ENCODE measurements at regions of chr10 and their contacts with region 1.

Region 1: DNA sequence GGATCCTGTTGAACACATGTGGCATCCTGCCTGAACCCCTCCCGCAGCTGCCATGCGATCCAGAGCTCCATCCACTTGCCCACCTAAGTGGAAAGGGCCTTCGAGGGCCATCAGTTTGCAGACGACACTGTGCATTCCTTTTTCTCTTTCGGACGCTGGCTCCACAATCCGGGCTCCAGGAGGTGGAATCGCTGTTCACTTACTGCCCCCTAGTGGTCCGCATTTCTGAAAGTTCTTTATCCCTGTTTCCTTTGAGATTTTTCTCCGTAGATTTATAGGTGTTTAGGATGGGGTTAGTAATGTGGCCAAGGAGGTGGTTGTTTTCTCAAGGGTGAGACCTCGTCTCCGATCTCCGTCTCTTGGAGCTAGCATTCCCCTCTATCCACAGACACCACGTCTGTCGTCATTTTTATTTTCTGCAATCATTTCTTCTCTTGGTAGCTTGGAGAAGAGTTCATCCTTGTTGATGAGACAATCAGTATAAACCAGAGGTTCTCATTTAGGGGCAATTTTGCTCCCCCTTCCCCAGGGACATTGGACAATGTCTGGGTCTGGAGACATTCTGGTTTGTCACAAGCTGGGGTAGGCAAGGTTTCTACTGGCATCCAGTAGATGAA is 204.6 kb downstream of the ARHGAP21 start:
- DNase-seq: peak; percentile 76
- H3K4me3 ChIP-seq: peak overlapping the region in 1 of 2 experiments; percentile 10; a peak in 1 of 4 replicates
- H3K27ac ChIP-seq: no peak overlapping the region
- H3K4me1 ChIP-seq: peaks cover 0 to 3% of the 10 kb centered on the region in 2 experiments; a peak in 2 of 4 replicates
- H3K27me3 ChIP-seq: no peaks in the 10 kb centered on the region
- CTCF ChIP-seq: peak; percentile 89
- EP300 ChIP-seq: 0 out of 4 replicates have a peak, but pooled peaks of 1 of the 2 experiments have one; percentile 10
- RAD21 ChIP-seq: peak; percentile 87

Region 2: GRCh38 chr10:24360282-24361127 is 158.6 kb before region 1 on chr10:
- CTCF ChIA-PET with region 1: interaction called, 19 read pairs
- POLR2A ChIA-PET with region 1: no interaction called
- DNase-seq: peak; percentile 68
- H3K4me3 ChIP-seq: no peak overlapping the region; a peak in 1 of 4 replicates
- H3K27ac ChIP-seq: no peak overlapping the region
- H3K4me1 ChIP-seq: no peaks in the 10 kb centered on the region; a peak in 1 of 4 replicates
- H3K27me3 ChIP-seq: no peaks in the 10 kb centered on the region
- CTCF ChIP-seq: peak; percentile 86
- EP300 ChIP-seq: no peak
- RAD21 ChIP-seq: peak; percentile 91

Region 3: DNA sequence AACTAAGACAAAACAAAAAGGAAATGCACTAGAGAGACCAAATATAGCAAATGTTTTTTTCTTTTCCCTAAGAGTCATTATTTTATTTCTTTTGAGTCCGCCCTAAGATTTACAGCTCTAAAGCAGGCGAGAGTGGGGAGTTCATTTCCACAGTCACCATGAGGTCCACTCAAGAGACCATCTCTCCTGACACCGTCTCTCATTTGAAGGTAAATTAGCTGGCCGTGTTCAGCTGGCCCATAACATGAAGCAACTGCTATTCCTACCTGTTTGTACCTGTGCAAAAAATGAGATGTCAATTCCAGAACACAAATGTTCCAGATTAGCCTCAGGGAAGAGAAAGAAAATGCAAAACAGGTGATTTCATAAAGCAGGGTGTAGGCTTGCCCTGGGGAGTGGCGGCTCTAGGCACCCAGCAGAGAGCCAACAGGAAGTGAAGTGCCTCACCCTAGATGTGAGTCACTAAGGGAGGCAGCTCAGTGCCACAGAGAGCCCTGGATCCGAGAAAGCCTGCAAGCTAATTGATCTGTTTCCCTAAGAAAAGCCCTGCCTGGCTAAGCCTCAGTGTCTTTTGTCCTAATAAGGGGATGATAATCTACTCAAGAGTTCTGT is 35.5 kb before region 1 on chr10:
- CTCF ChIA-PET with region 1: interaction called, 12 read pairs
- POLR2A ChIA-PET with region 1: no interaction called
- DNase-seq: no peak
- H3K4me3 ChIP-seq: no peak overlapping the region
- H3K27ac ChIP-seq: no peak overlapping the region
- H3K4me1 ChIP-seq: peaks cover 0 to 4% of the 10 kb centered on the region in 2 experiments; a peak in 1 of 4 replicates
- H3K27me3 ChIP-seq: no peaks in the 10 kb centered on the region
- CTCF ChIP-seq: no peak
- EP300 ChIP-seq: no peak
- RAD21 ChIP-seq: no peak

Region 4: GRCh38 chr10:24503461-24504320 is 15.4 kb before region 1 on chr10:
- CTCF ChIA-PET with region 1: interaction called, 52 read pairs
- POLR2A ChIA-PET with region 1: interaction called, 5 read pairs
- DNase-seq: peak; percentile 63
- H3K4me3 ChIP-seq: no peak overlapping the region; a peak in 1 of 4 replicates
- H3K27ac ChIP-seq: no peak overlapping the region
- H3K4me1 ChIP-seq: peaks cover 0 to 4% of the 10 kb centered on the region in 2 experiments; a peak in 2 of 4 replicates
- H3K27me3 ChIP-seq: no peaks in the 10 kb centered on the region
- CTCF ChIP-seq: peak; percentile 85
- EP300 ChIP-seq: no peak
- RAD21 ChIP-seq: peak; percentile 88

Region 5: GRCh38 chr10:24533981-24534380 is 14.9 kb after region 1 on chr10:
- CTCF ChIA-PET with region 1: interaction called, 13 read pairs
- POLR2A ChIA-PET with region 1: no interaction called
- DNase-seq: no peak
- H3K4me3 ChIP-seq: no peak overlapping the region
- H3K27ac ChIP-seq: no peak overlapping the region
- H3K4me1 ChIP-seq: no peaks in the 10 kb centered on the region
- H3K27me3 ChIP-seq: no peaks in the 10 kb centered on the region
- CTCF ChIP-seq: no peak
- EP300 ChIP-seq: no peak
- RAD21 ChIP-seq: no peak

Measured in SK-N-SH (cell line).